Activated T-helper 1 cell treated with anti-CD3 and anti-CD28 coated beads, Interleukin-12 subunit alpha, Interleukin-12 subunit beta, Interleukin-2, Interleukin-4 antibody, amounts not matched to agents 30 ng/mL and 10 ng/mL and 1 ng/mL, durations not matched to agents 14 hours and 24 hours and 36 hours (primary cell): ENCODE measurements at regions of chr6 and their contacts with region 1.

Region 1: GRCh38 chr6:70884074-70884983 is 72.5 kb downstream of the B3GAT2 start:
- DNase-seq: peak; percentile 22
- H3K4me3 Mint-ChIP-seq: no peak overlapping the region
- H3K27ac Mint-ChIP-seq: no peak overlapping the region
- H3K4me1 Mint-ChIP-seq: no peaks in the 10 kb centered on the region
- H3K27me3 Mint-ChIP-seq: peaks cover 11% of the 10 kb centered on the region

Region 2: GRCh38 chr6:70221025-70221714 is 663.2 kb before region 1 on chr6:
- intact Hi-C with region 1: loop called (anchors 10 kb)
- DNase-seq: no peak
- H3K4me3 Mint-ChIP-seq: no peak overlapping the region
- H3K27ac Mint-ChIP-seq: no peak overlapping the region
- H3K4me1 Mint-ChIP-seq: no peaks in the 10 kb centered on the region
- H3K27me3 Mint-ChIP-seq: peaks cover 4% of the 10 kb centered on the region

Region 3: DNA sequence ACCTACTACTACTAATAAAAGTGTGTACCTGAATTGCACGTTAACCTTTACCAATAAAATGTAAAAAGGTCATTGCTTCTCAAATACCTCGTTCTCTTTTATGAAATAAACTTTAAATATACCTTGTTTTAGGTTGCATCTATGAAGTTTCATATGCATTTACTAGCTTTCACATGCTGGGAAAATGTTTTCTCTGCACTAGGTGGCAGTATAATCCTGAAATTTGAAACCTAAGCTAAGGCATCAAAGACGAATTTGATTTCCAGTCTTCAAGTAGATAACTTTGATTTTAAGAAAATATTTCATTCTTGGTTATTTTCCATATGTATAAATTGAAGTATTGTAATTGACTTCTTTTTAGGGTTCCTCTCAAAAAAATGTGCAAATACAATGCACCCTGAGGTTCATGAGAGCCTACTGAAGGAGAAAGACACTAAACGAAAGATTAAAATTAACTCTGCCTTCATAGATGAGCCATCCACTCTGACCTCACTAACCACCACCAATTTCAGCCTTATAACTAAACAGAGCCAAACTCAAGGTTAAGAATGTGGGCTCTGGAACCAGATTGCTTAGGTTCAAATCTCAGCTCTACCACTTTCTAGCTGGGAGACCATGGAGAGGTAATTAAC is 574.1 kb before region 1 on chr6:
- intact Hi-C with region 1: loop called (anchors 1 kb)
- DNase-seq: no peak
- H3K4me3 Mint-ChIP-seq: no peak overlapping the region
- H3K27ac Mint-ChIP-seq: no peak overlapping the region
- H3K4me1 Mint-ChIP-seq: peaks cover 6% of the 10 kb centered on the region
- H3K27me3 Mint-ChIP-seq: peaks cover 4% of the 10 kb centered on the region

Region 4: GRCh38 chr6:70369332-70369950 is 514.9 kb before region 1 on chr6:
- intact Hi-C with region 1: loop called (anchors 1 kb)
- DNase-seq: peak; percentile 43
- H3K4me3 Mint-ChIP-seq: no peak overlapping the region
- H3K27ac Mint-ChIP-seq: no peak overlapping the region
- H3K4me1 Mint-ChIP-seq: no peaks in the 10 kb centered on the region
- H3K27me3 Mint-ChIP-seq: peaks cover 24% of the 10 kb centered on the region

Region 5: DNA sequence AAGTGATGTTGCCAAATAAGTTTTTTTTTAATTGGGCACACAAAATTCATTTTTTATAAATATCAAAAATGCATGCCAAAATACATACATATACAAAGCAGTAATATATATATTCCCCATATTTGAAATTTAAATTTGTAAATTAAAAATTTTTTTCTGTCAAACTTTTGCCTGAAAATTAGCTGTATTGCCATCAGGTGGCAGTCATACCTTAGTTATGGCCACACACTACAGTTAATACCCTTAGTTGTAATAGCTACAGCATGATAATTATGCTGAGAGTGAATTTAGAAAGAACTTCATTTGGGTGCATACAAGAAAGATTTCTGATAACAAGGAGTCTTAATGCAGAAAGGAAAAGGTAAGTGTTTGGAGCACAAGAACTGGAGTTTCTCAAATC is 363.8 kb before region 1 on chr6:
- intact Hi-C with region 1: loop called (anchors 1 kb)
- DNase-seq: no peak
- H3K4me3 Mint-ChIP-seq: no peak overlapping the region
- H3K27ac Mint-ChIP-seq: no peak overlapping the region
- H3K4me1 Mint-ChIP-seq: peaks cover 7% of the 10 kb centered on the region
- H3K27me3 Mint-ChIP-seq: no peaks in the 10 kb centered on the region

Region 6: DNA sequence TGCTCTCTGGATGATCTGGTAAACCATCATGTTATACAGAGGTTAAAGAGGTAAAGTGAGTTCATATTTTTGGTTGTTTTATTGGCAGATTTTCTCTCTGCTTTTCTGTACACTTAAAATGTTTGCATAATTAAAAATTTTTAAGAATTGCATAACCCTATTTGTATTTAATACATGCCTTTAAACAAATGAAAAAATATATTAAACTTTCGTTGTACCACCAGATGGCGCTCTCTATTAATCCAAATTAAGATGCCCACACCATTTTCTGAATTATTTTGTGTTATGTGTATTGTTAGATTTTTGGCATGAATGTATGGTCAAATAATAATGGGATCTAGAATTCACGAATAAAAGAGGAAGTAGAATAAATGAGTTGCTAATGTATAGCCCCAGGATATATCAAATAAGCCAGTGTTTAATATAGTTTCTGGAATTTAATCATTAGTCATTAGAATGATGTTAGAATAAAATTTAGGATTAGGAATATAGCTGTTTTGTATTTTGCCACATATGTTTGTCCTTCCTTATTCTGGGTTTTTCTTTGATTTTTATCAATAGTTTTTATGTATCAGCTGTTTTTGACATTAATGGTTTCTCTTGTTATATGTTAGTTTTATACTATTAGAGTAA is 177.7 kb before region 1 on chr6:
- intact Hi-C with region 1: loop called (anchors 1 kb)
- DNase-seq: no peak
- H3K4me3 Mint-ChIP-seq: no peak overlapping the region
- H3K27ac Mint-ChIP-seq: no peak overlapping the region
- H3K4me1 Mint-ChIP-seq: peaks cover 14% of the 10 kb centered on the region
- H3K27me3 Mint-ChIP-seq: no peaks in the 10 kb centered on the region

Region 7: DNA sequence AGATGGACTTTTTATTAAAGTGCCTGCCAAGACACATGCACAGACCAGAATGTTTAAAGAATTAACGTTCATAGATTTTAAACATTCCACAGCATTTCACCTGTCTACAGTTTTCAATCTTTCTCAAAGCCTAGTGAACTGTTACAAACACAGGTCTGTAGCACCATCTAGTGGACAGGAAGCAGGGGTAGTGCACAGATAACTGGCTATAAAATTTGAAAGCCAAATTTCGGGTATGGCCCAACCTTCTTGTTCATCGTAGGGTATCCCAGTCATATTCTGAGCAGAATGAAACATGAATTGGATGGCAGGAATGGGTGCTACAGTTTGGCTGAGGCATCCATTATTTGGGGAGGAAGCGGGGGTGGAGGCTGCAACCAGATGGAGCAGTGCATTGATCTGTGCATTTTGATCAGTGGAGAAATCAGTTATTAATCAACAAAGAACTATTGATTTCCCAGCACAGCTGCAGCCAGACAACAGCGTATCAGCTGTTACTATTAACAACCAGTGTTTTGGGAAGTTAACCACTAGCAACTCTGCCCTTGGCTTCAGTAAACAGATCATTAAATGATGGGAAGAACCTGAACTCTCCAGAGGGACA is 128.6 kb after region 1 on chr6:
- intact Hi-C with region 1: loop called (anchors 1 kb)
- DNase-seq: no peak
- H3K4me3 Mint-ChIP-seq: no peak overlapping the region
- H3K27ac Mint-ChIP-seq: no peak overlapping the region
- H3K4me1 Mint-ChIP-seq: no peaks in the 10 kb centered on the region
- H3K27me3 Mint-ChIP-seq: peaks cover 5% of the 10 kb centered on the region